ENCODE measurements at regions of chr12 and their contacts with region 1.

Region 1: DNA sequence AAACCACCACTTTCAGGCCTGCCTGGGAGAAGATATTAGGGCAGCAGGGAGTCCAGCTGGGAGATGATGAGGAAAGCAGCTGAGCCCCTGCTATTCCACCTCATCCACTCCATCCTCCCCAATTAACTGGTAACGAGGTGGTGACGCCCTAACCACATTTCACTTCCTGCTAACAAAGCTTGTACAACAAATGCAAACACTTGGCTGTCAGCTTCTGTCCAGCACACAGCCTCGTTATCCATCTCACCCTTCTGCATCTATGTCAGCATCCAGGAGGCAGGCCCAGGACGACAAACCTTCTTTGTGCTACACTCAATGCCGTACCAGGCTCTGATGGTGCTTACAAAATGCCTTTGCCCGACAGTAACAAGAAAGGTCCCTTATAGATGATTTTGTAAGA is 225.4 kb downstream of the APAF1 start:
- DNase-seq: peak; percentile 63
- H3K4me3 Mint-ChIP-seq: no peak overlapping the region
- H3K27ac Mint-ChIP-seq: no peak overlapping the region
- H3K4me1 Mint-ChIP-seq: peaks cover 4% of the 10 kb centered on the region
- H3K27me3 Mint-ChIP-seq: peaks cover 13% of the 10 kb centered on the region

Region 2: DNA sequence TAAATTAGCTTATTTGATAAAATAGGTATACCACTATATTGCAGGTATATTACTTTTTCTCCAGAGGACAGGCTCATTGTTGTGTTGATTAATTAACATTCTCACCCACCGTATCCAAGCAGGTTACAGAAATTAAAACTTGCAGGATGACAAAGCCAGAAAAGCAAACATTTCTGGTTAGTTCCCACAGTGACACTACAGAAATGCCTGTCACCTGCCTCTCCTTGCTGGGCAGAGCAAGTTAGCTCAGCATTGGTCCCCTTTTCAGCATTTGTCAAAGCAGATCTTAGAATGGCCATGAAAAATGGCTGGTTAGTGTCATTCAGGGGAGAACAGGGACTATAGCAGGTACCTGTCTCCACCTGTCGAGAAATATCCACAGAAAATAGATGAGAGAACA is 1369.1 kb before region 1 on chr12:
- intact Hi-C with region 1: loop called (anchors 10 kb)
- DNase-seq: no peak
- H3K4me3 Mint-ChIP-seq: no peak overlapping the region
- H3K27ac Mint-ChIP-seq: no peak overlapping the region
- H3K4me1 Mint-ChIP-seq: no peaks in the 10 kb centered on the region
- H3K27me3 Mint-ChIP-seq: no peaks in the 10 kb centered on the region

Region 3: GRCh38 chr12:98725476-98726247 is 144.8 kb before region 1 on chr12:
- intact Hi-C with region 1: loop called (anchors 10 kb)
- DNase-seq: peak; percentile 84
- H3K4me3 Mint-ChIP-seq: no peak overlapping the region
- H3K27ac Mint-ChIP-seq: peak overlapping the region; percentile 39
- H3K4me1 Mint-ChIP-seq: peaks cover 14% of the 10 kb centered on the region
- H3K27me3 Mint-ChIP-seq: no peaks in the 10 kb centered on the region